ENCODE measurements at regions of chr6 and their contacts with region 1.

Region 1: DNA sequence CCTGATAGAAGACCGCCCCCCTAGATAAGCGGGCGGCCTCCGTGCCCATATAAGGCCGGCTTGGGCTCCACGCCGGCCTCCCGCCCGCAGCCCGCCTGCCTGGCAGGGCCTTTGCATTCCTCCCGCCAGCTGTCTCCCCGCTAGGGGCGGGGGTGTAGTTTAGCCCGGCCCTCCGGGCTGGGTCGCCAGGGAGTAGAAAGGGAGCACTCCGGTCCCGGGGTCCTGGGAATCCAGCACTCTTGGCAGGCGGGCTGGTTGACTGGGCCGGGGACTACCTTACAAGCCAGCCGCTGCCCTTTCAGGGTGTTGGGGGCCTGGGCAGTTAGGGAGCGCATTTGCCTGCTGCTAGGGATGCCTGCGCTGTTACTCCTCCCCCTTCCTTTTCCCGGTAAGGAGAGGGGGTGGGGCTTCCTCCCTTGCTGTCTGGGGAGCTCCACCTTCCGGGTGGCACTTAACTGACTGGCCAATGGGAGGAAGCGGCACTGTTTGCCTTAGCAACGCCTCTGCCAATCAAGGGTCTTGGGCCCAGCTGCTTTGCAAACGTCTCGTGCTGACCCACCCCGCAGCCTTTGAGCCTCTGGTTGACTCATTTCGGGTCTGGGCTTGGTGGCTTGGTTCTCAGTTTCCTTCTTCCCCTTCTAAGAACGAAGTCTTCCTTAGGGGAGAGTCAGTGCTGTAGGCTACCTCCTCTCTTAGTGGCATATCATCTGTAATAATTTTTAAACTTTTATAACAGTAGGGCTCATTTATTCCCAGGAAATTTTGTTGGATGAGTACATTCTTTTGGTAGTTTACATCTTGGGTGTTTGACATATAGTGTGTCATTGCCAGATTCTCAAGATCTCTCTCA is 3.4 kb downstream of the SRF start:
- DNase-seq: peak; percentile 77 to 98 (median 92)
- ATAC-seq: peak; percentile 52
- H3K4me3 ChIP-seq: peak overlapping the region; percentile 4 to 50
- H3K4me3 Mint-ChIP-seq: peak overlapping the region; percentile 63
- H3K27ac ChIP-seq: peak overlapping the region; percentile 62 to 89
- H3K27ac Mint-ChIP-seq: peak overlapping the region; percentile 95
- H3K4me1 ChIP-seq: peaks cover 40% of the 10 kb centered on the region
- H3K4me1 Mint-ChIP-seq: peaks cover 45% of the 10 kb centered on the region
- H3K27me3 ChIP-seq: no peaks in the 10 kb centered on the region
- H3K27me3 Mint-ChIP-seq: no peaks in the 10 kb centered on the region
- CTCF ChIP-seq: no peak

Region 2: DNA sequence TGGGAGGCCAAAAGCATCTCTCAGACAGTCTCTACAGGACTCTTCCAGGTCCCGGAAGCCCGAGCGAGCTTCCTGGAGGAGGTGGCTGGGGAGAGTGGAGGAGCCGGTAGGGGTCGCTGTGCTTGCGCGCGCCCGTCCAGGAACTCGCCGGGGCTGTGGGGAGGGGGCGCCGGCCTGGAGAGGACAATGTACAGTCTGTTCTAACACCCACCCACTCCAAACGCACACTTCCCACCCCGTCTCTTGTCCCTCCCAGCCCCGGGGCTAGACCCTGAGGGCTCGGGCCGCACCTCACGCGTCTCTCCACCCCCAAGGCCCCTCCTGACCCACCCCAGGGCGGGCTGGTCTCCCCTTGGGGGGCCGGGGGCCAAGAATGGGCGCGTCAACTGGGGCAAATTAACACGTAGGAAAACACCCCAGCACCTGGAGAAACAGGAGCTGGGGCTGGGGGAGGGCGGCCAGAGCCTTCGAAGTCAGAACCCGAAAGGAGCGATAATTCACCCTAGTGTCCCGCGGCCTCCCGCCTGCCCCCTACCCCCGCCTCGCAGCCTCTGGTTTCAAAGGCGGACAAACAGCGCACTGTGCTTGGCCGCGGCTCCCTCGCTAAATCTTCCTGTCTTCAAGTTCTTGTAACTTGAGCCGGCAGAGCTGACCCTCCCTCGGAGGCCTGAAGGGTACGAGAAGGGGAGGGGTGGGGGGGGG is 1731.5 kb before region 1 on chr6:
- CTCF ChIA-PET with region 1: no interaction called
- POLR2A ChIA-PET with region 1: no interaction called
- intact Hi-C with region 1: no loop called
- DNase-seq: peak in 3 of 9 experiments; percentile 23 to 49 (median 34)
- ATAC-seq: no peak
- H3K4me3 ChIP-seq: no peak overlapping the region
- H3K4me3 Mint-ChIP-seq: peak overlapping the region; percentile 22
- H3K27ac ChIP-seq: no peak overlapping the region
- H3K27ac Mint-ChIP-seq: no peak overlapping the region
- H3K4me1 ChIP-seq: peaks cover 50% of the 10 kb centered on the region
- H3K4me1 Mint-ChIP-seq: peaks cover 47% of the 10 kb centered on the region
- H3K27me3 ChIP-seq: peaks cover 0 to 23% of the 10 kb centered on the region in 2 experiments
- H3K27me3 Mint-ChIP-seq: peaks cover 13% of the 10 kb centered on the region
- CTCF ChIP-seq: peak; percentile 34

Region 3: DNA sequence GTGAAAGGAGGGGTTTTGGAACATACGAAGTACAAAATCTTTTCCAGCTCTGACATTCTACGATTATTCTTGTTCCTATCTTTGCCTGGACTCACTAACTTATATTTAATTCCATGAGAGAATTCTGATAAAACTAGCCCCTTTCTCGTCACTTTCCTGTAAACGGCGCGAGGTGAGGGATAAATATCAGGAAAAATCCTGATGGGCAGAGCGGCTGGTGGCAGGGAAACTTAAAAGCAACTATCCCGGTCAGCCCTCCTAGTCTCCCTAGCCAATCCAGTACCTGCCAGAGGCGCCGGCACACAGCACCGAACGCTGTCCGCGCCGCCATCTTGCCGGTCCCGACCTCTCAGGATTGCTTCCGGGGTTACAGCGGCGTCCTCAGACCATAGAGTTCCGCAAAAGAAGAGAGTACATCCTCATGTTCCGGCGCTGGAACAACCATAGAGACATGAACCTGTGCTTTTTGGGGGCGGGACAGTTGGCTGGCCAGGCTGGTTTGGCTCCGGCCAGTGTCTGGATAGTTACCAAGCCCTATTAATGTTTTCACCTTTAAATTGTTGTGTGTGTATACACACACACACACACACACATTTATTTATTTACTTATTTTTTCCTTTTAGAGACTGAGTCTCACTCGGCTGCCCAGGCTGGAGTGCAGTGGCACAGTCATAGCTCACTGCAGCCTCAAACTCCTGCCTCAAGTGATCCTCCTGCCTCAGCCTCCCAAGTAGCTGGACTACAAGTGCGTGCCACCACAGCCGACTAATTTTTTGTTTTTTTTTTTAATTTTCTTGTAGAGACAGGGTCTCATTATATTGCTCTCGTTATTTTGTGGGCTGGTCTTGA is 956.7 kb before region 1 on chr6 and contains the start of gene MRPS10:
- CTCF ChIA-PET with region 1: no interaction called
- POLR2A ChIA-PET with region 1: no interaction called
- intact Hi-C with region 1: loop called in 1 of 2 experiments (anchors 5 kb)
- DNase-seq: peak; percentile 81 to 95 (median 91)
- ATAC-seq: peak; percentile 99
- H3K4me3 ChIP-seq: peak within 1 kb of the TSS; percentile 70 to 93
- H3K4me3 Mint-ChIP-seq: peak within 1 kb of the TSS; percentile 99
- H3K27ac ChIP-seq: peak within 1 kb of the TSS; percentile 63 to 74
- H3K27ac Mint-ChIP-seq: peak within 1 kb of the TSS; percentile 97
- H3K4me1 ChIP-seq: peaks cover 8% of the 10 kb centered on the region
- H3K4me1 Mint-ChIP-seq: peaks cover 25% of the 10 kb centered on the region
- H3K27me3 ChIP-seq: no peaks in the 10 kb centered on the region
- H3K27me3 Mint-ChIP-seq: no peaks in the 10 kb centered on the region
- CTCF ChIP-seq: no peak
- total RNA-seq, gene MRPS10: 17.0 to 17.4 TPM

Region 4: GRCh38 chr6:42482174-42482573 is 692.3 kb before region 1 on chr6:
- CTCF ChIA-PET with region 1: no interaction called
- POLR2A ChIA-PET with region 1: no interaction called
- intact Hi-C with region 1: no loop called
- DNase-seq: no peak
- ATAC-seq: no peak
- H3K4me3 ChIP-seq: no peak overlapping the region
- H3K4me3 Mint-ChIP-seq: no peak overlapping the region
- H3K27ac ChIP-seq: no peak overlapping the region
- H3K27ac Mint-ChIP-seq: no peak overlapping the region
- H3K4me1 ChIP-seq: no peaks in the 10 kb centered on the region
- H3K4me1 Mint-ChIP-seq: no peaks in the 10 kb centered on the region
- H3K27me3 ChIP-seq: no peaks in the 10 kb centered on the region
- H3K27me3 Mint-ChIP-seq: no peaks in the 10 kb centered on the region
- CTCF ChIP-seq: no peak

Region 5: GRCh38 chr6:43053545-43054205 is 120.8 kb before region 1 on chr6 and contains the start of gene CUL7:
- CTCF ChIA-PET with region 1: no interaction called
- POLR2A ChIA-PET with region 1: interaction called, 5 read pairs
- intact Hi-C with region 1: loop called in 1 of 2 experiments (anchors 1 kb)
- DNase-seq: peak; percentile 71 to 94 (median 91)
- ATAC-seq: peak; percentile 99
- H3K4me3 ChIP-seq: peak within 1 kb of the TSS; percentile 81 to 83
- H3K4me3 Mint-ChIP-seq: peak within 1 kb of the TSS; percentile 92
- H3K27ac ChIP-seq: peak within 1 kb of the TSS; percentile 79 to 89
- H3K27ac Mint-ChIP-seq: peak within 1 kb of the TSS; percentile 97
- H3K4me1 ChIP-seq: peaks cover 25% of the 10 kb centered on the region
- H3K4me1 Mint-ChIP-seq: peaks cover 48% of the 10 kb centered on the region
- H3K27me3 ChIP-seq: no peaks in the 10 kb centered on the region
- H3K27me3 Mint-ChIP-seq: no peaks in the 10 kb centered on the region
- CTCF ChIP-seq: no peak
- total RNA-seq, gene CUL7: 5.2 to 5.4 TPM

Region 6: GRCh38 chr6:43163899-43164298 is 10.6 kb before region 1 on chr6:
- CTCF ChIA-PET with region 1: no interaction called
- POLR2A ChIA-PET with region 1: no interaction called
- intact Hi-C with region 1: no loop called
- DNase-seq: no peak
- ATAC-seq: no peak
- H3K4me3 ChIP-seq: no peak overlapping the region
- H3K4me3 Mint-ChIP-seq: no peak overlapping the region
- H3K27ac ChIP-seq: no peak overlapping the region
- H3K27ac Mint-ChIP-seq: no peak overlapping the region
- H3K4me1 ChIP-seq: no peaks in the 10 kb centered on the region
- H3K4me1 Mint-ChIP-seq: no peaks in the 10 kb centered on the region
- H3K27me3 ChIP-seq: no peaks in the 10 kb centered on the region
- H3K27me3 Mint-ChIP-seq: no peaks in the 10 kb centered on the region
- CTCF ChIP-seq: no peak

Region 7: DNA sequence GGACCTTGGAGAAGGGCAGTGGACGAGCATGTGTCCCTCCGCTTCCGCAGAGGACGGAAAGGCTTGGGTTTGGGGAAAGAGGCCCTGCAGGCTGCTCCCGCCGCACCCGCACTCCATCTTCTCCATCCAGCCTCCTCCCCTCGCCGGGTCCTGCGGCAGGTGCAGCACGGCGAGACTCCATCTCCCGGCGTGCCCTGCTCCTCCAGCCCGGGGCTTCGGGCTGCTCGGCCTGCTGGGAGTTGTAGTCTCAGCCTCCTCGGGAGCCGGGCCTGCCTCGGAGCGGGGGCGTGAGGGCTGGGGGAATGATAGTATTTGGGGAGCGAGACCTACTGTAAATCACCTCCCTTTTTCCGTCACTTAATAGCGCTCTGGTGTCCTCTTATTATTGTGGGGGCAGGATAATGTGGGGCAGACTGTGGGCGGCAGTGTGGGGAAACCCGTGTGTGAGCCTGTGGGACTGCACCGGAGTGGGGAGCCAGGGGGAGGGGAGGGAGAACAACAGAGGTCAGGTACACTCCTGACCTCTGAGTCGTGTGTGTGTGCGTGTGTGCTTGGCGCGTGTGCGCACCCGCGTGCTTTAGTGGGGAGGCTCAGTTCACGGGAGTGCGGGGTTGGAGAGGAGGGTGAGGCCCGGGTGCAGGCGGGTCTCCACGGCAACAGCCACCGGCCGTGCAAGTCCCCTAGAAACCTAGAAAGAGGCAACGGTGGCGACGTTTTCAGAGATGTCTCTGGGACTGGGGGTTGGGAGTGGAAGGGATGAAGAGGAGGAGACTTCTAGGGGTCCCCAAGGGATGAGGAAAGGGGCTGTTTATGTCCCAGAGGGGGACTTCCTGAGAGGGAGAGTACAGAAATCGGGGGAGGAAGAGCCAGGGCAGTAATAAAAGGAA is 72.9 kb after region 1 on chr6:
- CTCF ChIA-PET with region 1: no interaction called
- POLR2A ChIA-PET with region 1: no interaction called
- intact Hi-C with region 1: loop called (anchors 1 kb)
- DNase-seq: peak; percentile 59 to 87 (median 78)
- ATAC-seq: peak; percentile 95
- H3K4me3 ChIP-seq: peak overlapping the region; percentile 65 to 71
- H3K4me3 Mint-ChIP-seq: no peak overlapping the region
- H3K27ac ChIP-seq: peak overlapping the region; percentile 19 to 40
- H3K27ac Mint-ChIP-seq: peak overlapping the region; percentile 88
- H3K4me1 ChIP-seq: peaks cover 11% of the 10 kb centered on the region
- H3K4me1 Mint-ChIP-seq: peaks cover 15% of the 10 kb centered on the region
- H3K27me3 ChIP-seq: peaks cover 11 to 22% of the 10 kb centered on the region in 2 experiments
- H3K27me3 Mint-ChIP-seq: peaks cover 16% of the 10 kb centered on the region
- CTCF ChIP-seq: no peak

Region 8: DNA sequence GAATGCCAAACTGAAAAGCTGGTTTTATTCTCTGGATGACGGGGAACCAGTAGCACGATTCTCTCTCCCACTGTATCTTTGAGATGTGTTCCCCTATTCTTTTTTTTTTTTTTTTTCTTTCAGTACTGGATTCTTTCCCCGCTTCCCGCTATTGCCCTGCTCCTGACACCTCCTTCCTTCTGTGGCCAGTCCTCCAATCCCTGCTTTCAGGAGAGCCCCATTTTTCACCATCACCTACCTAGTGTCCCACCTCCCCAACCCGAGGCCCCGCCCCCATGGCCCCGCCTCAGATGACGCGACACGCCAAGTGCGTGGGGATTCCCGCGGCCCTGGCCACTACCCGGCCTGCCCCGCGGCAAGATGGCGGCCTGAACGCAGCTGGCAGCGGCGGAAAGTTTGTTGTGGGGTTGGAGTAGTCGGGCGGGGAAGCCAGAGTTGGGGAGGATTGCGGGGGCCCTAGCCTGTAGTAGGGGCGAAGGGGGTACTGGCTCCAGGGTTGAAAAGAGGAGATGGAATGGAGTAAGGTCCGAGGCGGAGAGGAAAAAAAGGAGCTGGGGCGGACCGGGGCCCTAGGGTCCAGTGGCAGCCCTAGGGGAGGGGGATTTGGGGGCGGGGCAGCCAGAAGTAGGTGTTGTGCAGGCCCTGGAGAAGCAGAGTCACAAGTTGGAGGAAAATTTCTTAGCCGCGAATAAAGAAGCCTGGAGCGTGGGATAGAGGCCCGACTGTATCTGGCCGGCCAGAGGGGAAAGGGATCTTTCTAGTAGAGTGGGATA is 302.9 kb after region 1 on chr6 and contains the start of gene TJAP1:
- CTCF ChIA-PET with region 1: no interaction called
- POLR2A ChIA-PET with region 1: no interaction called
- intact Hi-C with region 1: loop called (anchors 5 kb)
- DNase-seq: peak; percentile 93 to 98 (median 96)
- ATAC-seq: peak; percentile 99
- H3K4me3 ChIP-seq: peak within 1 kb of the TSS; percentile 64 to 83
- H3K4me3 Mint-ChIP-seq: peak within 1 kb of the TSS; percentile 95
- H3K27ac ChIP-seq: peak within 1 kb of the TSS; percentile 93 to 95
- H3K27ac Mint-ChIP-seq: peak within 1 kb of the TSS; percentile 97
- H3K4me1 ChIP-seq: peaks cover 17% of the 10 kb centered on the region
- H3K4me1 Mint-ChIP-seq: peaks cover 48% of the 10 kb centered on the region
- H3K27me3 ChIP-seq: no peaks in the 10 kb centered on the region
- H3K27me3 Mint-ChIP-seq: no peaks in the 10 kb centered on the region
- CTCF ChIP-seq: no peak
- total RNA-seq, gene TJAP1: 29.2 to 29.7 TPM

Region 9: DNA sequence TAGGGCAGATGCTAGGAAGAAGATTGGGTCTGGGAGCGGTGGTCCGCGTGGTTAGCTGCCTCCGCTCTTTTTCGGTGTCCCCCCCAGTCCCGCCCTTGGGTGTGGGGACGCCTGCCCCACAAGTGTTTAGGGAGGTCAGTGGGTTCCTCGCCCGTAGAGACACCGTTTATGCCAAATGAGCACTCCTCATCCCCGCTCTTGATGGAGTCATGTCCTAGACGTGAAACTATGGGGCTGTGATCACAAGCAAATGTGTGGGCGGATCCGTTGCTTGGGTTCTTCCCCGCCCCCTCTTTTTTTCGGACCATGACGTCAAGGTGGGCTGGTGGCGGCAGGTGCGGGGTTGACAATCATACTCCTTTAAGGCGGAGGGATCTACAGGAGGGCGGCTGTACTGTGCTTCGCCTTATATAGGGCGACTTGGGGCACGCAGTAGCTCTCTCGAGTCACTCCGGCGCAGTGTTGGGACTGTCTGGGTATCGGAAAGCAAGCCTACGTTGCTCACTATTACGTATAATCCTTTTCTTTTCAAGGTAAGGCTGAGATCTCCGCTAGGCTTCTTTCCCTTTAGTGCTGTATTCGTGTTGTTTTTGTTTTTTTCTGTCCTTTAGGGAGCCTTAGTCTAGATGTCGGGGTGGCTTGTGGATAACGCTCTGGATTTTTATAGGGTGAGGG is 1072.3 kb after region 1 on chr6 and contains the start of gene HSP90AB1:
- CTCF ChIA-PET with region 1: no interaction called
- POLR2A ChIA-PET with region 1: no interaction called
- intact Hi-C with region 1: loop called in 1 of 2 experiments (anchors 5 kb)
- DNase-seq: peak; percentile 89 to 99 (median 94)
- ATAC-seq: peak; percentile 79
- H3K4me3 ChIP-seq: peak within 1 kb of the TSS; percentile 96 to 98
- H3K4me3 Mint-ChIP-seq: peak within 1 kb of the TSS; percentile 99
- H3K27ac ChIP-seq: peak within 1 kb of the TSS; percentile 95 to 96
- H3K27ac Mint-ChIP-seq: peak within 1 kb of the TSS; percentile 98
- H3K4me1 ChIP-seq: peaks cover 26% of the 10 kb centered on the region
- H3K4me1 Mint-ChIP-seq: peaks cover 50% of the 10 kb centered on the region
- H3K27me3 ChIP-seq: no peaks in the 10 kb centered on the region
- H3K27me3 Mint-ChIP-seq: no peaks in the 10 kb centered on the region
- CTCF ChIP-seq: no peak
- total RNA-seq, gene HSP90AB1: 561 to 585 TPM

Measured in CD8-positive, alpha-beta T cell (primary cell).